Mammary epithelial cell (primary cell): ENCODE measurements at regions of chr6 and their contacts with region 1.

Region 1: GRCh38 chr6:155174576-155175211 is 89.1 kb upstream of the CLDN20 start:
- DNase-seq: peak; percentile 80
- H3K4me3 ChIP-seq: no peak overlapping the region
- H3K27ac ChIP-seq: no peak overlapping the region
- H3K4me1 ChIP-seq: peaks cover 17% of the 10 kb centered on the region
- H3K27me3 ChIP-seq: no peaks in the 10 kb centered on the region
- CTCF ChIP-seq: peak; percentile 63 to 71

Region 2: GRCh38 chr6:154805288-154805911 is 369.3 kb before region 1 on chr6:
- CTCF ChIA-PET with region 1: no interaction called
- dilution Hi-C with region 1: no loop called
- in situ Hi-C with region 1: no loop called
- intact Hi-C with region 1: loop called (anchors 5 kb)
- DNase-seq: peak; percentile 18
- H3K4me3 ChIP-seq: no peak overlapping the region
- H3K27ac ChIP-seq: no peak overlapping the region
- H3K4me1 ChIP-seq: no peaks in the 10 kb centered on the region
- H3K27me3 ChIP-seq: no peaks in the 10 kb centered on the region
- CTCF ChIP-seq: peak; percentile 21 to 54

Region 3: GRCh38 chr6:154928325-154928922 is 246.3 kb before region 1 on chr6:
- CTCF ChIA-PET with region 1: no interaction called
- dilution Hi-C with region 1: loop called (anchors 5 kb)
- in situ Hi-C with region 1: loop called (anchors 5 kb)
- intact Hi-C with region 1: loop called (anchors 1 kb)
- DNase-seq: peak; percentile 42
- H3K4me3 ChIP-seq: no peak overlapping the region
- H3K27ac ChIP-seq: no peak overlapping the region
- H3K4me1 ChIP-seq: peaks cover 16% of the 10 kb centered on the region
- H3K27me3 ChIP-seq: no peaks in the 10 kb centered on the region
- CTCF ChIP-seq: peak; percentile 72 to 81

Region 4: GRCh38 chr6:155240905-155241600 is 66.4 kb after region 1 on chr6:
- CTCF ChIA-PET with region 1: no interaction called
- dilution Hi-C with region 1: loop called (anchors 5 kb)
- in situ Hi-C with region 1: loop called (anchors 5 kb)
- intact Hi-C with region 1: no loop called
- DNase-seq: no peak
- H3K4me3 ChIP-seq: no peak overlapping the region
- H3K27ac ChIP-seq: no peak overlapping the region
- H3K4me1 ChIP-seq: no peaks in the 10 kb centered on the region
- H3K27me3 ChIP-seq: no peaks in the 10 kb centered on the region
- CTCF ChIP-seq: no peak

Region 5: DNA sequence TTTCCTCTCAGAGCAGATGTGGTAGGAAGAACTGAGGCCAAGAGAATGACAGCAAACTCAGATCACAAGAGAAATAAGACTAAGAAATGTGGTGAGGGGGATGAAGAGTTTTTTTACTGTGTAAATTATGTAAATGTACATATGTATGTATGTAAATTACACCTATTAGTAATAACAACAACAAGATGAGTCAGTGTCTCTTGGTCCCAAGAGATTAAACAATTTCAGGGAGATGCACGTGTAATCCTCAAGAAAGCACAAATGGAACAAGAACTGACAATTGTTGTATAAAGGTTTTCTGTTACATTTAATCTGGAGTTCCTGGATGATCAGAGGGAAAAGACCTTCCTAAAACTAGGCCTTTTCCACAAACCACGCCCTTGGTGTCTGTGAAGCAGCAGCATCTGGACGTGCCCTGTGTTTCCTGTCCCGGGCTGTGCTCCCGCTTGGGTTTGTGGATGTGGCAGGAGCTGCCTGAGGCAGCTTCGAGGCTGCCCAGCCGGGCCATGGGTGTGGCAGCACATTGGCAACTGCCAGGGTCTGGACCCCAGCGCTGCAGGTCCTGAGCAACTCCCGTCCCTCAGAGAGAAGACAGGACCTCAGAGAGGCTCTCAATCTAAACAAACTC is 90.1 kb after region 1 on chr6:
- CTCF ChIA-PET with region 1: no interaction called
- dilution Hi-C with region 1: no loop called
- in situ Hi-C with region 1: no loop called
- intact Hi-C with region 1: loop called (anchors 5 kb)
- DNase-seq: peak; percentile 30
- H3K4me3 ChIP-seq: no peak overlapping the region
- H3K27ac ChIP-seq: peak overlapping the region; percentile 14
- H3K4me1 ChIP-seq: peaks cover 10% of the 10 kb centered on the region
- H3K27me3 ChIP-seq: no peaks in the 10 kb centered on the region
- CTCF ChIP-seq: no peak

Region 6: DNA sequence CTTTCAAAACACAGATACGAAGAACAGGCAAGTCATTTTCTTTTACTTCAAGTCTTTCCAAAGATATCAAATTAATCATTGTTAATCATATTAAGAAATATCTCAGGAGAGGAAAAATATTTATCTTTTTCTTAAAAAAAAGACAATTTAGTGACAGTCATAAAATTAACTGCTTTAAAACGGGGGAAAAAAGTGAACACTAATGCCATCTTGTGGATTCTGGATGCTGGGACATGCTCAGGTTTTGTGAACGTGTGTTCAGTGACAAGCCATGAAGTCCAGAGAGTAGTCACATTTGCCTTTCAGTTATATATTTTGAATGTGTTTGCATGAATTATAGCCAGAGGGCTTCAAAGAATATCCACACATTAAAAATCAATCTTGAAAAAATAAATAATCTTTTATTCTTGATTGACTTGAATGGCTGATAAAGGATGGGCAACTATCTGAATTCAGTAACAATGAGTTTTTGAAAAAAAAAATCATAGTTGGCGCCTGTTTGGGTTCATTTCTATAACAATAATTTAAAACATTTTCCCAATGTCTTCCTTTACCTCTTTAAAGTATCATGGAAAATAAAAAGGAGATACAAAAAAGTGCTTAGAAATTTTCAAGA is 355.6 kb after region 1 on chr6:
- CTCF ChIA-PET with region 1: interaction called, 5 read pairs
- dilution Hi-C with region 1: no loop called
- in situ Hi-C with region 1: no loop called
- intact Hi-C with region 1: loop called (anchors 10 kb)
- DNase-seq: peak; percentile 31
- H3K4me3 ChIP-seq: no peak overlapping the region
- H3K27ac ChIP-seq: no peak overlapping the region
- H3K4me1 ChIP-seq: peaks cover 12% of the 10 kb centered on the region
- H3K27me3 ChIP-seq: no peaks in the 10 kb centered on the region
- CTCF ChIP-seq: peak; percentile 79 to 81